Mucosa of descending colon (tissue), 3 donors: ENCODE measurements at regions of chr4 and their contacts with region 1.

Region 1: GRCh38 chr4:73258686-73259570 is at the start of gene ANKRD17:
- DNase-seq: peak; percentile 96 to 97 (median 96)
- ATAC-seq: peak; percentile 90
- H3K4me3 ChIP-seq: peak within 1 kb of the TSS; percentile 58
- H3K4me1 ChIP-seq: peaks cover 37% of the 10 kb centered on the region
- CTCF ChIP-seq: no peak
- total RNA-seq, gene ANKRD17: 62.4 to 75.3 (median 70.4) TPM

Region 2: DNA sequence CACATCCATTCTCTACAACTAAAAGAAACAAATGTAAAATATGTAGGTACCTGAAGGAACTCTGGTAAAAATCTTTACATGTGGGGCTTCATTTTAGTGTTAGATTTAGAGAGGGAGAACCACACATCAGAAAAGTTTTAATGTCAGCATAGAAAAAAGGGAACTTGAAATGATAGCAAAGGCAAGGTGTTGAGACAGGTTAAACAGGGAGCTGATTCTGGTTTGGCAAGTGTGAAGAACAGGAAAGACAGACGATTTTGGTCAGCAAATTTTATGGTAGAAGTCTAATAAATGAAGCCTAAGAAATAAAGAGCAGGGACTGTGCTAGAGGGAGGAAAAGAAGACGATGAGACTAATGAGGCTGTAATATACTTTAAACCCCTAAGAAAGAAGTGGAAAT is 121.8 kb before region 1 on chr4:
- intact Hi-C with region 1: no loop called
- DNase-seq: no peak
- ATAC-seq: no peak
- H3K4me3 ChIP-seq: no peak overlapping the region
- H3K4me1 ChIP-seq: no peaks in the 10 kb centered on the region
- CTCF ChIP-seq: no peak

Region 3: DNA sequence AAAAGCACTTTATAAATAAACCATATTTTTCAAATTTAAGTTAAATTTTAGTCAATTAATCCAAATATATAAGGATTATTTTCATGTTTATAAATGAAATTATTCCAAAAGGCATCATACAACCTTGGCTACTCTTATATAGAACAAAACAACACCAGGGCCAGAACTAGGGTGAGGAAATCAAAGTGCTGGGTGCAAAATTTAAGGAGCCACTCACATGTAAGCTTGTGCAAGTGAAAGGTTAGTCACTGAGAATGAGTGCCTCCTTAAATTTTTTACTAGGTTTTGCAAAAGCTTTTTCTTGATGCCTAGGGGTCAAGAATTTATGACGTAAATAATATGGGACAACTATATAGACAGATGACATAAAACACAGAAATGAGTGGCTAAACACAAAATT is 106.0 kb before region 1 on chr4:
- intact Hi-C with region 1: loop called in 1 of 2 experiments (anchors 10 kb)
- DNase-seq: no peak
- ATAC-seq: no peak
- H3K4me3 ChIP-seq: no peak overlapping the region
- H3K4me1 ChIP-seq: no peaks in the 10 kb centered on the region
- CTCF ChIP-seq: no peak

Region 4: DNA sequence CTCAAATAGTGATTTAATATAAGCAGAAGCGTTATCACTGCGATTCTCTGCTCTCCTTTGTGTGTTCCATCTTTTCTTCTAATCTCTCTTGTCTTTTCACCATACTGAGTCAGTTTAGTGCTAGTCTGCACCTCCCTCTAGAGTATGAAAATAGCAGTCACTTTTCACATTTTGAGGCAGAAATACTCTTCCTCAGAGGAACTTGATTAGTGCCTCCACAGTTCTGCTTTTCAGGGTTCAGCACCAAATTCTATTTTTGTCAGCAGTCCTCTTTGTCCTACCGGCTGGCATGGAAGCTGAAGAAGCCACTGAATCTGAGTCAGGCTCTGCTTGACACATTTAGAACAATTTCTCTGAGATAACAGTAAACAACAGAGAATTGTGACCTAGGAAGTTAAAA is 49.4 kb after region 1 on chr4:
- intact Hi-C with region 1: no loop called
- DNase-seq: no peak
- ATAC-seq: no peak
- H3K4me3 ChIP-seq: no peak overlapping the region
- H3K4me1 ChIP-seq: no peaks in the 10 kb centered on the region
- CTCF ChIP-seq: no peak

Region 5: GRCh38 chr4:73329300-73329699 is 70.4 kb after region 1 on chr4:
- intact Hi-C with region 1: no loop called
- DNase-seq: no peak
- ATAC-seq: no peak
- H3K4me3 ChIP-seq: no peak overlapping the region
- H3K4me1 ChIP-seq: no peaks in the 10 kb centered on the region
- CTCF ChIP-seq: no peak

Region 6: GRCh38 chr4:73450398-73451004 is 191.6 kb after region 1 on chr4:
- intact Hi-C with region 1: no loop called
- DNase-seq: peak in 1 of 3 donors; percentile 38
- ATAC-seq: no peak
- H3K4me3 ChIP-seq: no peak overlapping the region
- H3K4me1 ChIP-seq: no peaks in the 10 kb centered on the region
- CTCF ChIP-seq: no peak